Panc1 (cell line): ENCODE measurements at regions of chr17 and their contacts with region 1.

Region 1: DNA sequence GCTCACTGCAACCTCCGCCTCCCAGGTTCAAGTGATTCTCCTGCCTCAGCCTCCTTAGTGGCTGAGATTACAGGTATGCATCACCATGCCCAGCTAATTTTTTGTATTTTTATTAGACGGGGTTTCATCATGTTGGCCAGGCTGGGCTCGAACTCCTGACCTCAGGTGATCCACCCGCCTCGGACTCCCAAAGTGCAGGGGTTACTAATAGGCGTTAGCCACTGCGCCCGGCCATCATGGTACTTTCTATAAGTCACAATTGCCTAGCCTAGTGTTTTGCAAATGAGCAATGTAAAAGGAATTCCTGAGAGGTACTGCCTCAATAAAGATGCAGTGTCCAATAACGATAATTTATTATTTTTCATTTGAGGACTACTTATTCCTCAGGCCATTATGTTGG is 13.9 kb upstream of the PSMC3IP start:
- DNase-seq: no peak
- ATAC-seq: no peak
- H3K4me3 ChIP-seq: no peak overlapping the region
- H3K27ac ChIP-seq: no peak overlapping the region
- H3K4me1 ChIP-seq: no peaks in the 10 kb centered on the region
- H3K27me3 ChIP-seq: no peaks in the 10 kb centered on the region
- CTCF ChIP-seq: no peak

Region 2: GRCh38 chr17:42609182-42609813 is 17.9 kb after region 1 on chr17 and contains the starts of genes RETREG3 and TUBG1:
- CTCF ChIA-PET with region 1: no interaction called
- POLR2A ChIA-PET with region 1: interaction called, 15 read pairs
- in situ Hi-C with region 1: no loop called
- intact Hi-C with region 1: no loop called
- DNase-seq: peak; percentile 93
- ATAC-seq: peak; percentile 96
- H3K4me3 ChIP-seq: peak within 1 kb of the TSS; percentile 92 to 97
- H3K27ac ChIP-seq: peak within 1 kb of the TSS; percentile 89
- H3K4me1 ChIP-seq: peaks cover 11% of the 10 kb centered on the region
- H3K27me3 ChIP-seq: no peaks in the 10 kb centered on the region
- CTCF ChIP-seq: no peak
- total RNA-seq, gene RETREG3: 42.3 TPM
- total RNA-seq, gene TUBG1: 99.8 TPM